Activated CD4-positive, alpha-beta T cell treated with anti-CD3 and anti-CD28 coated beads for 36 hours (primary cell): ENCODE measurements at regions of chr15 and their contacts with region 1.

Region 1: GRCh38 chr15:94196531-94196930 is 34.8 kb upstream of the MCTP2 start:
- DNase-seq: no peak
- ATAC-seq: no peak
- H3K4me3 Mint-ChIP-seq: no peak overlapping the region
- H3K27ac Mint-ChIP-seq: no peak overlapping the region
- H3K4me1 Mint-ChIP-seq: no peaks in the 10 kb centered on the region
- H3K27me3 Mint-ChIP-seq: no peaks in the 10 kb centered on the region

Region 2: GRCh38 chr15:93929375-93930094 is 267.0 kb before region 1 on chr15:
- CTCF ChIA-PET with region 1: no interaction called
- POLR2A ChIA-PET with region 1: interaction called, 11 read pairs
- intact Hi-C with region 1: no loop called
- DNase-seq: no peak
- ATAC-seq: no peak
- H3K4me3 Mint-ChIP-seq: no peak overlapping the region
- H3K27ac Mint-ChIP-seq: no peak overlapping the region
- H3K4me1 Mint-ChIP-seq: peaks cover 2% of the 10 kb centered on the region
- H3K27me3 Mint-ChIP-seq: peaks cover 2% of the 10 kb centered on the region

Region 3: GRCh38 chr15:93997084-93997918 is 199.2 kb before region 1 on chr15:
- CTCF ChIA-PET with region 1: no interaction called
- POLR2A ChIA-PET with region 1: no interaction called
- intact Hi-C with region 1: loop called in 1 of 2 experiments (anchors 10 kb)
- DNase-seq: no peak
- ATAC-seq: no peak
- H3K4me3 Mint-ChIP-seq: no peak overlapping the region
- H3K27ac Mint-ChIP-seq: no peak overlapping the region
- H3K4me1 Mint-ChIP-seq: no peaks in the 10 kb centered on the region
- H3K27me3 Mint-ChIP-seq: no peaks in the 10 kb centered on the region